ENCODE measurements at regions of chr12 and their contacts with region 1.

Region 1: DNA sequence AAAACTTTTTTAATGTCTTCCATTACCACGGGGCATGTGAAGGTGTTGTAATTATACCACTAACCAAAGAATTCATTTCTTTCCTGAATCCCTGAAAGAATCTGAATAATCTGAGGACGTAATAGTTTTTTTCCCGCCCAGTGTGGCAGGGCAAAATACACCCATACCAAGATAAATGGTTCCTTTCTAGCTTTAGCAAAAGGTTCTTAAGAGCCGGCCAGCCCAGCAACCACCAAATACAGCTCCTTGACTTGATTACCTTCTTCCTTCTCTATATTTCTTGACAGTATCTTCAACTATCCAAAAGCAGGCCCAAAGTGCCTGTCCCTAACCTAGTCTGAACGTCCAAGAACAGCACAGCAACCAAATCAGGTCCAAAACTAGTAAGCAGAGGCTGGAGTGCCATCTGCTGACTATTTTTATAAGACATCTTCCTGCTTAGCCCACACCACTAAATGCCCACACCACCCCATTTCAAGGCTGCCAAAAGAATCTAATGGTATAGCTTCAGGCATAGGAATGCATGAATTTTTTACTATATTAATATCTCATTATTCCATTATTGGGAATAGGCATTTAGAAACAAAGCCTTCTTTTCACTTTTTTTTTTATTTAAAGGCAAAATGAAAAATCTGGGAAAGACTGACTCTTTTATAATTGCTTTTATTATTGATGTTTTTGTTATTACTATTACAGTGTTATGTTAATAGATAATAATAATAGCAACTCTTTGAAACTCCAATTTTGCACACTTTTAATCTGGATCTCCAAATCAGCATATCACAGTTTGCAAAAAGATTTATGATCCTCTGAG is 524.4 kb downstream of the MED13L start:
- DNase-seq: peak in 4 of 5 donors; percentile 29 to 47 (median 36)
- ATAC-seq: peak; percentile 80 to 94 (median 88)
- H3K4me3 ChIP-seq: no peak overlapping the region
- H3K27ac ChIP-seq: no peak overlapping the region
- H3K4me1 ChIP-seq: peaks cover 0 to 16% (median 3%) of the 10 kb centered on the region in 12 donors
- H3K27me3 ChIP-seq: peaks cover 0 to 26% (median 11%) of the 10 kb centered on the region in 9 donors
- CTCF ChIP-seq: peak; percentile 40 to 79 (median 70)
- POLR2A ChIP-seq: no peak

Region 2: DNA sequence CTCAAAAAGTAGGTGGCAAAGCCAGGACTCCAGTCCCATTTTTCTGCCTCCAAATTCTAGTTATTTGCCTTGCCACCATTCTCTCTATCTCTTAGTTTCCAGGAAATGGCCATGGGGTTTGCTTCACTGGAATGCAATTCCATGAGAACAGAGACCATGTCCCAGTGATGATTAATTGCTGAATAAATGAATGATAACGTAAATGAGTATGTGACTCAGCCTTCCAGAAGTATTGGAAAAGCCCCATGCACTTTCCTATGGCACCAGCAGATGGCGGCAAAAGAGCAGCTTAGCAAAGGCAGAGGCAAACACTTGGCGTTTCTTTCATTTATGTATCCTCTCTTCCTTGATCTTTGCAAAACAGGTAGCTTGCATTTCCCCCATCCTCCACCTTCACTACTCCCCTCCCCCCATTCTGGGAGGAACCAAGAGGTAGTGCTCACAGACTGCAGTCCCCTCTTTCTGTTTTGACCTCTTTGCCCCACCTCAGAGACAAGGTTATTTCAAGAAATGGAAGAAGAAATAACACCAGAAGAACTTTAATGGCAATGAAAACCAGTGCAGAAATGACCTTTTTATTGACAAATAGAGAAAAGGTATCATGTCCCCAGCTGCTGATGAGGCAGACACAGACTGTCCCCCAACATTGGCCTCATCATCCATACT is 1090.5 kb before region 1 on chr12:
- intact Hi-C with region 1: loop called in 4 of 10 experiments (anchors 1 to 2 kb)
- DNase-seq: peak in 4 of 5 donors; percentile 55 to 69 (median 64)
- ATAC-seq: peak in 3 of 4 donors; percentile 31 to 63 (median 50)
- H3K4me3 ChIP-seq: no peak overlapping the region
- H3K27ac ChIP-seq: no peak overlapping the region
- H3K4me1 ChIP-seq: peaks cover 0 to 20% (median 4%) of the 10 kb centered on the region in 12 donors
- H3K27me3 ChIP-seq: peaks cover 24 to 70% (median 37%) of the 10 kb centered on the region in 9 donors
- CTCF ChIP-seq: peak; percentile 89 to 96 (median 94)
- POLR2A ChIP-seq: no peak

Region 3: GRCh38 chr12:115172521-115172920 is 580.6 kb before region 1 on chr12:
- intact Hi-C with region 1: loop called in 1 of 10 experiments (anchors 10 kb)
- DNase-seq: no peak
- ATAC-seq: no peak
- H3K4me3 ChIP-seq: no peak overlapping the region
- H3K27ac ChIP-seq: no peak overlapping the region
- H3K4me1 ChIP-seq: peaks cover 0 to 8% (median 0%) of the 10 kb centered on the region in 12 donors
- H3K27me3 ChIP-seq: no peaks in the 10 kb centered on the region
- CTCF ChIP-seq: no peak
- POLR2A ChIP-seq: no peak

Region 4: GRCh38 chr12:115337693-115338543 is 415.2 kb before region 1 on chr12:
- intact Hi-C with region 1: loop called in 1 of 10 experiments (anchors 10 kb)
- DNase-seq: peak in 4 of 5 donors; percentile 44 to 72 (median 57)
- ATAC-seq: peak; percentile 86 to 93 (median 92)
- H3K4me3 ChIP-seq: no peak overlapping the region
- H3K27ac ChIP-seq: peak overlapping the region in 11 of 12 donors; percentile 29 to 72 (median 56)
- H3K4me1 ChIP-seq: peaks cover 0 to 33% (median 3%) of the 10 kb centered on the region in 12 donors
- H3K27me3 ChIP-seq: no peaks in the 10 kb centered on the region
- CTCF ChIP-seq: no peak
- POLR2A ChIP-seq: peak in 1 of 2 donors; percentile 16

Region 5: DNA sequence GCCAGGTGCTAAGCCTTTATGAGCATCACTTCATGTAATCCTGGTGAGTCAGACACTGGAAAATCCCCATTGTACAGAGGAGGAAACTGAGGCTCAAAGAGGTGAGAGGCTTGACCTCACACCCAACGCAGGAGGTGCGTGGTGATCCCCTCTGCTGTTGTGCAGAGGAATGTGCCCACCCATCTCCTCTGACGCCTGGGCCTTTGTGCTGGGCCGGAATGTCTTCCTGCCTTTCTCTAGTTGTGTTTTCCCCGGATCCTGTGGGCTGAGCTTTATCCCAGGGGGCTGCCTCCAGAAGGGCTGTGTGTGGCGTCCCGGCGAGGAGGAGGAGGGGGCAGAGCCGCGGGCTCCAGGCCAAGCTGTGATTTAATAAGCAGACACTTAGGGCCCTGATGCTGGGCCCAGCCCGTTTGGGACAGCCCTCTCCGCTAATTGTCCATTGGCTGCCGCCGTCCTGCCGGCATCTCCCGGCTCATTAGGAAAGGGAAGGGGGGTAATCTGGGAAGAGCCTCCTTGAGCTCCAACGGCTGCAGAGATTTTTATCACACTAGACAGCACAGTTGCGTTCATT is 129.3 kb before region 1 on chr12:
- intact Hi-C with region 1: loop called in 1 of 10 experiments (anchors 10 kb)
- DNase-seq: peak; percentile 81 to 88 (median 86)
- ATAC-seq: peak; percentile 87 to 97 (median 88)
- H3K4me3 ChIP-seq: no peak overlapping the region
- H3K27ac ChIP-seq: peak overlapping the region in 7 of 12 donors; percentile 24 to 70 (median 56)
- H3K4me1 ChIP-seq: peaks cover 0 to 11% (median 0%) of the 10 kb centered on the region in 12 donors
- H3K27me3 ChIP-seq: peaks cover 0 to 5% (median 0%) of the 10 kb centered on the region in 9 donors
- CTCF ChIP-seq: no peak
- POLR2A ChIP-seq: no peak

Region 6: GRCh38 chr12:115660211-115660805 is 92.8 kb before region 1 on chr12:
- intact Hi-C with region 1: loop called in 2 of 10 experiments (anchors 2 to 5 kb)
- DNase-seq: peak in 4 of 5 donors; percentile 39 to 67 (median 50)
- ATAC-seq: peak; percentile 76 to 96 (median 82)
- H3K4me3 ChIP-seq: no peak overlapping the region
- H3K27ac ChIP-seq: peak overlapping the region; percentile 47 to 85 (median 64)
- H3K4me1 ChIP-seq: peaks cover 0 to 28% (median 11%) of the 10 kb centered on the region in 12 donors
- H3K27me3 ChIP-seq: no peaks in the 10 kb centered on the region
- CTCF ChIP-seq: no peak
- POLR2A ChIP-seq: no peak

Region 7: GRCh38 chr12:115983226-115983798 is 230.2 kb after region 1 on chr12:
- intact Hi-C with region 1: no loop called
- DNase-seq: no peak
- ATAC-seq: no peak
- H3K4me3 ChIP-seq: no peak overlapping the region
- H3K27ac ChIP-seq: no peak overlapping the region
- H3K4me1 ChIP-seq: peaks cover 0 to 25% (median 6%) of the 10 kb centered on the region in 12 donors
- H3K27me3 ChIP-seq: no peaks in the 10 kb centered on the region
- CTCF ChIP-seq: peak in 7 of 12 donors; percentile 9 to 31 (median 20)
- POLR2A ChIP-seq: no peak

Measured in heart left ventricle (tissue), 16 donors.